Activated CD8-positive, alpha-beta T cell treated with anti-CD3 and anti-CD28 coated beads for 36 hours (primary cell): ENCODE measurements at regions of chr7 and their contacts with region 1.

Region 1: GRCh38 chr7:55365675-55366460 is 731 bp downstream of the LANCL2 start:
- DNase-seq: peak; percentile 93
- ATAC-seq: peak; percentile 89
- H3K4me3 Mint-ChIP-seq: peak overlapping the region; percentile 96
- H3K27ac Mint-ChIP-seq: peak overlapping the region; percentile 97
- H3K4me1 Mint-ChIP-seq: peaks cover 11% of the 10 kb centered on the region
- H3K27me3 Mint-ChIP-seq: no peaks in the 10 kb centered on the region
- CTCF ChIP-seq: peak; percentile 43

Region 2: DNA sequence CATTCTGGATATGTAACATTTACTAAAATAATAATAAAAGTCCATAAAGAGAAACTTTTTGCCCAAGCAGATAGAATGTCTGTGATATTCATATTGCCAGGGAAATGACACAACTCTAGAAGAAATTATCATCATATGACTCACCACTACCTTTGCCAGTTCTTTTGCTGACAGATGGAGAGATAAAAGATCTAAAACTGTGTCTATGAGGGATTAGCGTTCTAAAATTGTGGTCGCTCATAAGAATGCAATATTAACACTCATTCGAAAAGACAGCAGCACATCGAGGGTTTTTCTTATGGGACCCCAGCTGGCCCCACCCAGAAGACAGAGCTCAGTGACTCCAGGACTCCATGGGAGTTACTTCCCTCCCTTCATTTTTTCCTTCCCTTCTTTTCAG is 17.4 kb before region 1 on chr7:
- CTCF ChIA-PET with region 1: no interaction called
- POLR2A ChIA-PET with region 1: interaction called, 16 read pairs
- intact Hi-C with region 1: no loop called
- DNase-seq: no peak
- ATAC-seq: peak; percentile 64
- H3K4me3 Mint-ChIP-seq: no peak overlapping the region
- H3K27ac Mint-ChIP-seq: no peak overlapping the region
- H3K4me1 Mint-ChIP-seq: peaks cover 5% of the 10 kb centered on the region
- H3K27me3 Mint-ChIP-seq: peaks cover 15% of the 10 kb centered on the region
- CTCF ChIP-seq: no peak

Region 3: GRCh38 chr7:55572378-55573233 is 206.7 kb after region 1 on chr7 and contains the start of gene VOPP1:
- CTCF ChIA-PET with region 1: no interaction called
- POLR2A ChIA-PET with region 1: interaction called, 5 read pairs
- intact Hi-C with region 1: loop called (anchors 5 kb)
- DNase-seq: peak; percentile 54
- ATAC-seq: peak; percentile 45
- H3K4me3 Mint-ChIP-seq: peak within 1 kb of the TSS; percentile 87
- H3K27ac Mint-ChIP-seq: peak within 1 kb of the TSS; percentile 95
- H3K4me1 Mint-ChIP-seq: peaks cover 61% of the 10 kb centered on the region
- H3K27me3 Mint-ChIP-seq: no peaks in the 10 kb centered on the region
- CTCF ChIP-seq: no peak
- total RNA-seq, gene VOPP1: 32.6 to 34.7 TPM